G401 (cell line): ENCODE measurements at regions of chr3 and their contacts with region 1.

Region 1: DNA sequence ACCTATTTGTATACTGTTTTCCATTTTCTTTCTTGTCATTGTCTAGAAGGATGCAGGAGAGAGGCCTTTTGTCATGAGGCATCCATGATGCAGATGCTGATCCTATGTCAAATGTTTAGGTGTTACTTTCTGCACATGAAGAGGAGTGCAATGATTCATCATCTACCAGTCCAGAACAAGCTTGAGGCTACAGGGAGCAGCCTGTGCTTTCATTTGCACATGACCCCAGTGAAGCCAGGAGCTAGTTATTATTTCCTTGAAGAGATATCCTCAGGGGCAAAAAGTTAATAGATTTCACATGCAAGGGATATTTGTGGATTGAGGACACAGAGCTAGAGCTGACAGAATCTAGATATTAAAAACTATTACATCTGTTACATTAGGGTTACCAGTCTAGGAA is 204.4 kb upstream of the TGFBR2 start:
- DNase-seq: no peak

Region 2: DNA sequence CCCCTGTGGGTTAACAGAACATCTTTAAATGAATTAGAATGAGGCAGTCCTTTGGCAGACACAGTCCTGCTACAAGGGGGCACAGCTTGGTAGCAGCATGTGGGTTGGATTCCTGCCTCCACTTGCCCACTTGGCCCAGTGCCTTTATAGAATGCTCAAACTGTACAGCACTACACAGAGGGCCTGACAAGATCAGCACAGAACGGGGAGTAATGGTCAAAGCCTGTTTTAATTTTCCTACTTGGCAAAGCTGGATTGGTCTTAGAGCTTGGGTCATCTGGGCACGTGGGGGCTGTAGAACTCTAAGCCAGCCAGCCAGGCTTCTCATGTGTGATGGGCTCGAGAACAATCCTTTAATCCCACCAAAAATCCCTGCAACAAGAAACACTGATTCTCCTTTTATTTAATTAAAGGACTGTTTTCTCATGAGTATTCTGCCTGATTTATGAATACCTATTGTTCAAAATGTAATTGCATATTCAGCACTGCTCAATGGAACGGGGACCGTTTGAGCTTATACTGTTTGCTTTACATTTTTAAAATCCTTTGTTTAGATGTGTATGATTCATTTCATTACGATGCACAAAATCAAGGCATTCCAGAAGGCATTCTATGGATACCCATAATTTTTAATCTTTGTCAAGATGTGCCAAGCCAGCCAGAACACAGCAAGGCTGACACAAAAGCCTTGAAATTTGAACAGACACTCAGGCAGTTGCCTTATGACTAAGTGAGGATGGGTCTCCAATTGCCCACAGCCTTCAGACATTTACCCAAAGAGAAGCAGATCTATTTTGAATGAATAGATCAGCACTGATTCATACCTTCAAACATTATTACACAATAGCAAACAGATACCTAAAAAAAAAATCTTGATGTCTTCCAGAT is 44.9 kb before region 1 on chr3:
- in situ Hi-C with region 1: no loop called
- DNase-seq: no peak

Region 3: GRCh38 chr3:30440147-30440604 is 38.2 kb after region 1 on chr3:
- in situ Hi-C with region 1: loop called (anchors 5 kb)
- DNase-seq: no peak